ENCODE measurements at regions of chr17 and their contacts with region 1.

Region 1: GRCh38 chr17:17445925-17446665 is 30.7 kb upstream of the MED9 start:
- H3K4me3 ChIP-seq: no peak overlapping the region
- H3K27ac ChIP-seq: peak overlapping the region; percentile 38; the same call in 1 of the 2 replicates
- H3K4me1 ChIP-seq: peaks cover 12% of the 10 kb centered on the region
- CTCF ChIP-seq: no peak

Region 2: GRCh38 chr17:17435323-17435722 is 10.8 kb before region 1 on chr17:
- CTCF ChIA-PET with region 1: interaction called, 5 read pairs
- POLR2A ChIA-PET with region 1: interaction called, 12 read pairs
- H3K4me3 ChIP-seq: no peak overlapping the region
- H3K27ac ChIP-seq: no peak overlapping the region
- H3K4me1 ChIP-seq: no peaks in the 10 kb centered on the region
- CTCF ChIP-seq: no peak